CD4-positive, alpha-beta T cell (primary cell): ENCODE measurements at regions of chr12 and their contacts with region 1.

Region 1: DNA sequence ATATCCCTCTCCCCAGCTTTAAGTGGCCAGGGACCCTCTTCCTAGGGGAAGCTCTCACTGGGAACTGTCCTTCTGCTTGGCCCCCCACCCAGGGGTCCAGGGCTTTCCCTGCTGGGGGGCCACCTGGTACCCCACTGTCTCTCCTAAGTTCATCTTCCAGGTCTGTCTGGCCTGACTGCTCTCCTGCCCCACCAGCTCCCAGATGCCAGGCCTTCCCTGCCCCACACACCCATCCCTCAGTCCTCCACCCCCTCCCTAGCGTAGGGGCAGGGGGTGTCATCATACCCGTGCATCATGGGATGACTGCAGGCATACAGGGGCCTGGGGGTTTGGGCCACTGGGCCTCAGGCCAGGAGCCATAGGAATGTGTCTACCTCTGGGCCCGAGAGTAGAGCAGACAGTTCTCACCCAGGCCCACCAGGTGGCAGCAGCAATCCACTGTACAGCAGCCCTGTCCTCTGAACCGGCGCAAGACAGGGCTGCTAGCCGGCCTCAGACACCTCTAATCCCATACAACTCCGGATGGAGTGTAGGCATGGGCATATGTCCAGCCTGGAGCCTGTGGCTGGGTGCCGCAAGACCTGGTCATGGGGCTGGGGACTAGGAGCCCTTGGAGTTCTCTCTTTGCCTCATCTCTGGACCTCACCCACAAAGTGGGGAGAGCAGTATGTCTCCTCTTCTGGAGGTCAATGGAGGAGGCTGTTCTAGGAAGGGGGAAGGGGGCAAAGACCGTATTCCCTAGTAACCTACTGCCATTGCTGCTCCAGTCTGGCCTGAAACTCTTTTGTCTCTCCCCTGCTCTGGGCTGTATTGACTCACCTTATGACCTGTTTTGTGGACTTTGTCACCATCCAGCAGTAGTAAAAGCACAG is 10.0 kb upstream of the SMARCD1 start:
- DNase-seq: peak; percentile 63 to 88 (median 77)
- ATAC-seq: peak; percentile 95
- H3K4me3 ChIP-seq: no peak overlapping the region
- H3K4me3 Mint-ChIP-seq: no peak overlapping the region
- H3K27ac ChIP-seq: no peak overlapping the region
- H3K27ac Mint-ChIP-seq: no peak overlapping the region
- H3K4me1 ChIP-seq: peaks cover 13% of the 10 kb centered on the region
- H3K4me1 Mint-ChIP-seq: peaks cover 7% of the 10 kb centered on the region
- H3K27me3 ChIP-seq: no peaks in the 10 kb centered on the region
- H3K27me3 Mint-ChIP-seq: peaks cover 5% of the 10 kb centered on the region
- CTCF ChIP-seq: peak; percentile 82

Region 2: DNA sequence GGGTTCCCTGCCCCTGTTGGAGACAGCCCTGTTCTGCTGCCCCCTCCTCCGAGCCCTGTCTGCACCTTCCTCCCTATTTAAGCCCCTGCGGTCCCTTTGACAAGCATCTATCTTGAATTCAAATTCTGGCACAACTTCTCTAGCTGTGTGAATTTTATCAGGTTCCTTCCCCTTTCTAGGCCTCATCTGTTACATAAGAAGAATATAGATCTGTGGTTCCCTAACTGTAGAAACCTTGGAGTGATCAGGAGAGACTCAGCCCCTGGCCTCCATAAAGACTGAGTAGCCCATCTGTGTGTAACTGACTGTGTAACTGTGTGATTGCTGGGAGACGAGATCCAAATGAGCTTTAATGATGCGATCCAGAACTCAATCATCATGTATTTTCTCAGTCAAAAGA is 36.8 kb before region 1 on chr12:
- CTCF ChIA-PET with region 1: interaction called, 14 read pairs
- POLR2A ChIA-PET with region 1: no interaction called
- intact Hi-C with region 1: loop called in 1 of 2 experiments (anchors 1 kb)
- DNase-seq: no peak
- ATAC-seq: no peak
- H3K4me3 ChIP-seq: no peak overlapping the region
- H3K4me3 Mint-ChIP-seq: no peak overlapping the region
- H3K27ac ChIP-seq: no peak overlapping the region
- H3K27ac Mint-ChIP-seq: no peak overlapping the region
- H3K4me1 ChIP-seq: no peaks in the 10 kb centered on the region
- H3K4me1 Mint-ChIP-seq: no peaks in the 10 kb centered on the region
- H3K27me3 ChIP-seq: peaks cover 0 to 3% of the 10 kb centered on the region in 2 experiments
- H3K27me3 Mint-ChIP-seq: peaks cover 23% of the 10 kb centered on the region
- CTCF ChIP-seq: no peak

Region 3: GRCh38 chr12:50043854-50044253 is 31.3 kb before region 1 on chr12:
- CTCF ChIA-PET with region 1: interaction called, 14 read pairs
- POLR2A ChIA-PET with region 1: no interaction called
- intact Hi-C with region 1: loop called in 1 of 2 experiments (anchors 1 kb)
- DNase-seq: no peak
- ATAC-seq: no peak
- H3K4me3 ChIP-seq: no peak overlapping the region
- H3K4me3 Mint-ChIP-seq: no peak overlapping the region
- H3K27ac ChIP-seq: no peak overlapping the region
- H3K27ac Mint-ChIP-seq: no peak overlapping the region
- H3K4me1 ChIP-seq: no peaks in the 10 kb centered on the region
- H3K4me1 Mint-ChIP-seq: no peaks in the 10 kb centered on the region
- H3K27me3 ChIP-seq: peaks cover 0 to 2% of the 10 kb centered on the region in 2 experiments
- H3K27me3 Mint-ChIP-seq: peaks cover 17% of the 10 kb centered on the region
- CTCF ChIP-seq: no peak

Region 4: DNA sequence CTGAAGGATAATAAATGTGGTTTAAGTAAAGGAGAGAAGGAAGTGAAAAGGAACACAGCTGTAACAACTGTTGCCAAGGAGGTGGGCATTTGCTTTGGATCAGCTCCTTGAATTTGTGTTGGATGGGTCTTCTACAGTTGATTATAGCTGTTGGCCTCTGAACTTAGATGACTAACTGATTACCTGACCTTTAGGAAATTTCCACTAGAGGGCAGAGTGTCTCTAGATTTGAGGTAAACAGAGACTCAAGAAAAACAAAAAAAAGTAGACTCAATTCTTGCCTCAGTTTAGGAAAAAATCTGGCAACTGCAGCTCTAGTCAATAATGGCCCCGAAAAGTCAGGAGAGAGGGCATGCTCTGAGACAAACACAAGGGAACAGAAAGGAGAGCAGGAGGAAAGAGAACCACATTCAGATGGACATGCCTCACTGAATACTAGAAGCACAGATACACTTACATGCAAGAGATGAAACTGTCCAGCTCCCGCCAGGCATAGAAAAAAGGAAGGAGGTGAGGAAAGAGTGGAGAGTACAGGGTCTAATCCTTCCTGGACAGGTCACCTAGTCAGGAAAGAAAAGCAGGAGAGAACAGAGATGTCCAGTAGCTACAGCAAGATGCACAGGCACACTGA is 57.4 kb after region 1 on chr12:
- CTCF ChIA-PET with region 1: interaction called, 3 read pairs
- POLR2A ChIA-PET with region 1: no interaction called
- intact Hi-C with region 1: loop called in 1 of 2 experiments (anchors 2 kb)
- DNase-seq: peak in 3 of 14 experiments; percentile 61 to 70 (median 63)
- ATAC-seq: peak; percentile 65
- H3K4me3 ChIP-seq: no peak overlapping the region
- H3K4me3 Mint-ChIP-seq: no peak overlapping the region
- H3K27ac ChIP-seq: no peak overlapping the region
- H3K27ac Mint-ChIP-seq: peak overlapping the region; percentile 16
- H3K4me1 ChIP-seq: no peaks in the 10 kb centered on the region
- H3K4me1 Mint-ChIP-seq: peaks cover 16% of the 10 kb centered on the region
- H3K27me3 ChIP-seq: no peaks in the 10 kb centered on the region
- H3K27me3 Mint-ChIP-seq: no peaks in the 10 kb centered on the region
- CTCF ChIP-seq: peak; percentile 82

Region 5: GRCh38 chr12:50174971-50175715 is 100.0 kb after region 1 on chr12:
- CTCF ChIA-PET with region 1: interaction called, 5 read pairs
- POLR2A ChIA-PET with region 1: no interaction called
- intact Hi-C with region 1: loop called (anchors 1 kb)
- DNase-seq: peak in 5 of 14 experiments; percentile 8 to 81 (median 69)
- ATAC-seq: peak; percentile 57
- H3K4me3 ChIP-seq: no peak overlapping the region
- H3K4me3 Mint-ChIP-seq: no peak overlapping the region
- H3K27ac ChIP-seq: no peak overlapping the region
- H3K27ac Mint-ChIP-seq: no peak overlapping the region
- H3K4me1 ChIP-seq: no peaks in the 10 kb centered on the region
- H3K4me1 Mint-ChIP-seq: no peaks in the 10 kb centered on the region
- H3K27me3 ChIP-seq: no peaks in the 10 kb centered on the region
- H3K27me3 Mint-ChIP-seq: no peaks in the 10 kb centered on the region
- CTCF ChIP-seq: peak; percentile 90

Region 6: DNA sequence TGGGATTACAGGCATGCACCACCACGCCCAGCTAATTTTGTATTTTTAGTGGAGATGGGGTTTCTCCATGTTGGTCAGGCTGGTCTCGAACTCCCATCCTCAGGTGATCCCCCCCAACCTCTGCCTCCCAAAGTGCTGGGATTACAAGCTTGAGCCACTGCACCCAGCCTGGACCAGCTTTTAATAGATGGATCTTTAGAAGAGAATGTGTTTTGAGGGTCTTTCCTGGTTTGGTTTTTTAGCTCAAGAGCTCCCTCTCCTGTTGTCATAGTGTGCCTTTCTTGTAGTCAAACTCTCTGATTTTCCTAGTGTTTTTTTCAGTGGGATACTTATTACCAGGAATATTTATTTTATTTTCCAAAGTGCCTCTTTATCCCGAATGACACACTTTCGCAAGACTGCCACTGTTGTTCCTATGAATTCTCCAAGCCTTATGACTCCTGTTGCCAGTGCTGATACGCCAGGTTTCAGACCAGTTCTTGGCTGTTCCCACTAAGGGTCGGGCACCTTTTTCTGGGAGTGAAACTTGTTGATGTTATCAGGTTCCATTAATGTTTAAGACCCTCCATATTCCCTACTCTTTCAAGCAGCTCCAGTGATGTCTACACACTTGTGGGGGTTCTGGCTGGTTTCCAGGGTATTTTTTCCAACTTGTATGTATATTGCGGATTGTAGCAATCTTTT is 239.6 kb after region 1 on chr12:
- CTCF ChIA-PET with region 1: no interaction called
- POLR2A ChIA-PET with region 1: no interaction called
- intact Hi-C with region 1: loop called in 1 of 2 experiments (anchors 10 kb)
- DNase-seq: peak in 3 of 14 experiments; percentile 11 to 18 (median 16)
- ATAC-seq: no peak
- H3K4me3 ChIP-seq: no peak overlapping the region
- H3K4me3 Mint-ChIP-seq: no peak overlapping the region
- H3K27ac ChIP-seq: no peak overlapping the region
- H3K27ac Mint-ChIP-seq: no peak overlapping the region
- H3K4me1 ChIP-seq: no peaks in the 10 kb centered on the region
- H3K4me1 Mint-ChIP-seq: no peaks in the 10 kb centered on the region
- H3K27me3 ChIP-seq: no peaks in the 10 kb centered on the region
- H3K27me3 Mint-ChIP-seq: no peaks in the 10 kb centered on the region
- CTCF ChIP-seq: peak; percentile 52